ENCODE measurements at regions of chr1 and their contacts with region 1.

Region 1: DNA sequence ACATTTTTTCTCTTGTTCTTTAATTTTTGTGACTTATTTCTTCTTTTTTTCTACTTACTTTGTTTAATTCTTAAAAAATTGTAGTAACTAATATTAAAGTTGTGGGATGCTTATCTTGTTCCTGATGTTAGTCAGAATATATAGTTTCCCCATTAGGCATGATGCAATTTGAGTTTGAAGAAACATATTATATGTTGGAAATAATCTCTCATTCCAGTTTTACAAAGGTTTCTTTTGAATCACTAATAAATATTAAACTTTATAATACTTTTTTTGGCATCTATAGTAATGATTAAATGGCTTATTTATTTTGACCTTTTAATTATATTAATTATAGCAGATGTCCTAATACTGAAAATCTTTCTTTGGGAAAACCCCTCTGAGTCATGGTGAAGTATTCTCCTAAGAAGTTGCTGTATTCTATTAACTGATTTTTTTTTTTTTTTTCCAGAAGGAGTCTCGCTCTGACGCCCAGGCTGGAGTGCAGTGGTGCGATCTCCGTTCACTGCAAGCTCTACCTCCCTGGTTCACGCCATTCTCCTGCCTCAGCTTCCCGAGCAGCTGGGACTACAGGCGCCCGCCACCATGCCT is 28.5 kb upstream of the PTGS2 start:
- DNase-seq: no peak
- H3K4me3 ChIP-seq: no peak overlapping the region
- H3K27ac ChIP-seq: no peak overlapping the region
- H3K4me1 ChIP-seq: no peaks in the 10 kb centered on the region
- H3K27me3 ChIP-seq: no peaks in the 10 kb centered on the region
- CTCF ChIP-seq: no peak

Region 2: DNA sequence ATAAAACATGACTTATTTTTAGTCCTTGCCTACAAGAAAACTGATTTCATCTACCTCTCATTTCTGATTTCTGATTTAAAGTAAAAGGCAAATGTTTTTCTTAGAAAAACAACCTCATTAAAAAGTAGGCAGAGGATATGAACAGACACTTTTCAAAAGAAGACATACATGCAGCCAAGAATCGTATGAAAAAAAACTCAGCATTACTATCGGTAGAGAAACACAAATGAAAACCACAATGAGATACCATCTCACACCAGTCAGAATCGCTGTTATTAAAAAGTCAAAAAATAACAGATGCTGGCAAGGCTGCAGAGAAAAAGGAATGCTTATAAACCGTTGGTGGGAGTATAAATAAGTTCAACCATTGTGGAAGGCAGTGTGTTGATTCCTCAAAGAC is 316.9 kb before region 1 on chr1:
- CTCF ChIA-PET with region 1: no interaction called
- POLR2A ChIA-PET with region 1: interaction called, 11 read pairs
- intact Hi-C with region 1: no loop called
- DNase-seq: no peak
- H3K4me3 ChIP-seq: no peak overlapping the region
- H3K27ac ChIP-seq: no peak overlapping the region
- H3K4me1 ChIP-seq: peaks cover 4% of the 10 kb centered on the region
- H3K27me3 ChIP-seq: no peaks in the 10 kb centered on the region
- CTCF ChIP-seq: no peak